Heart right ventricle (tissue), 16 donors: ENCODE measurements at regions of chr6 and their contacts with region 1.

Region 1: GRCh38 chr6:160348142-160349019 is at the start of gene SLC22A3:
- DNase-seq: peak in 1 of 2 donors; percentile 45
- ATAC-seq: peak; percentile 48 to 71 (median 60)
- H3K4me3 ChIP-seq: peak within 1 kb of the TSS; percentile 32 to 60 (median 52)
- H3K27ac ChIP-seq: peak within 1 kb of the TSS in 6 of 10 donors; percentile 7 to 64 (median 27)
- H3K4me1 ChIP-seq: peaks cover 0 to 16% (median 7%) of the 10 kb centered on the region in 9 donors
- H3K27me3 ChIP-seq: peaks cover 0 to 61% (median 48%) of the 10 kb centered on the region in 7 donors
- CTCF ChIP-seq: peak in 3 of 9 donors; percentile 9 to 19 (median 14)
- total RNA-seq, gene SLC22A3: 0.26 to 1.3 (median 0.64) TPM

Region 2: DNA sequence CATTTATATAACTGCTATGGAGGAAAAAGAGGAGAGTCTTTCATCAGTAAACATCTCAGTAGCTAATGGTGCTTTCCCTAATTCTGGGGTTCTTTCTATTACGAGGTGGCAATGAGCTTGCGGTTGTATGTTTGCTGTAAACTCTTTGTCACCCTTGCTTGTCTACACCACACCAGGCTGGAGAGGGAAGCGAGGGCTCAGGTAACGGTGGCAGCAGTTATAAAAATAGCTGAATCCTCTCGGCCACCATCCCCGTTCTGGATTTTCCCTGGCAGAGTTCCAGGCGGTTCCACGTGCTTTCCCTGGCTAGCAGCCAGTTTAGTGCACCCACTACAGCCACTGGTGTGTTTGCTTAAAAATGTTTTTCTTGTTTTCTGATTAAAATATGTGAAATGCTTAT is 418.6 kb before region 1 on chr6:
- intact Hi-C with region 1: loop called in 1 of 10 experiments (anchors 5 kb)
- DNase-seq: peak in 1 of 2 donors; percentile 36
- ATAC-seq: peak in 1 of 8 donors; percentile 42
- H3K4me3 ChIP-seq: no peak overlapping the region
- H3K27ac ChIP-seq: no peak overlapping the region
- H3K4me1 ChIP-seq: peaks cover 0 to 23% (median 7%) of the 10 kb centered on the region in 9 donors
- H3K27me3 ChIP-seq: no peaks in the 10 kb centered on the region
- CTCF ChIP-seq: no peak

Region 3: DNA sequence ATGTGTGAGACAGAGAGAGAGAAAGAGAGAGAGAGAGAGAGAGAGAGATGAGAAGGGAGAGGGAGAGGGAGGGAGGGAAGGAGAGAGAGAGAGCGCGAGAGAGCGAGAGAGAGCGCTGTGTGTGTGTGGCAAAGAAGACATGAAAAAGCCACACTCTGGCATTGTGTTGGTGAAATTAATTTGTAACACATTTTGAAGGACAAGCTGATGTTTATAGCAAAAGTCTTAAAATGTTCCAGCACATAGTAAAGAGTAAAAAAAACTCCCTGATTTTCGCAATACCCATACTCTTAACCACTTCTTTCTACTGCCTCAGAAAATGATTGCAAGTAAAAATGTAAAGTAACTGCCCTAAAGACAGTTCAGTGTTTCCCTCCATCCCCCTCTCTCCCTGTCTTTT is 170.1 kb before region 1 on chr6:
- intact Hi-C with region 1: no loop called
- DNase-seq: no peak
- ATAC-seq: no peak
- H3K4me3 ChIP-seq: no peak overlapping the region
- H3K27ac ChIP-seq: no peak overlapping the region
- H3K4me1 ChIP-seq: no peaks in the 10 kb centered on the region
- H3K27me3 ChIP-seq: peaks cover 0 to 7% (median 0%) of the 10 kb centered on the region in 7 donors
- CTCF ChIP-seq: no peak

Region 4: GRCh38 chr6:160379464-160379863 is 31.1 kb after region 1 on chr6:
- intact Hi-C with region 1: no loop called
- DNase-seq: no peak
- ATAC-seq: no peak
- H3K4me3 ChIP-seq: no peak overlapping the region
- H3K27ac ChIP-seq: no peak overlapping the region
- H3K4me1 ChIP-seq: no peaks in the 10 kb centered on the region
- H3K27me3 ChIP-seq: no peaks in the 10 kb centered on the region
- CTCF ChIP-seq: no peak

Region 5: DNA sequence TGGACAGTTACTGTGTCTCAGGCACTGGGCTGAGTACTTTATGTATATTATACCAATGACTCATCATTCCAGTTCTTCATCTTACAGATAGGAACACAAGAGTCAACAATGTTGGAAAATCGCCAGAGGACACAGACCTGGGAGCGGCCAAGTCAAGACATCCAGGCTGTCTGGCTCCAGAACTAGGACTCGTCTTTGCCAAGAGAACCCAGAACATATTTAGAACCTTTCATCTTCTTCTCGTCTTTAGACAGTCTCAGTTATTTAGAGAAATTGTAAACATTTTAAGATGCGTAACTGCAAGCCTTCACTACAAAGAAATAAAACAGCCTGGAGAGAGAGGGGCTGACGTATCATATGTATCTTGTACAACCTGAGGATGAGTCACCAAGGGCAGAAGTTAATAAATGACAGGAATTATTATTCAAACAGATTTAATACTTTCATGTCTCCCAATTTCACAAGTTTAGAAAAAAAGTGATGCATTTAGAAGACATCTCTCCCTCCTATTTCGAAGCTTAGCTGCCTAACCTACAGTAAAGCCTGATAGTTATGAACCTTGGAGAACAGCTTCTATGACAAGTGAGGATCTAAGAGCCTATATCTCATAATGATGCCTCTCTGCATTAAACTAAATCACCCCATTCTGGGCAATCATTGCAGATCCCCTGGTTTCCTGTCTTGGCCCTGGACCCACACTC is 43.2 kb after region 1 on chr6:
- intact Hi-C with region 1: no loop called
- DNase-seq: no peak
- ATAC-seq: no peak
- H3K4me3 ChIP-seq: no peak overlapping the region
- H3K27ac ChIP-seq: no peak overlapping the region
- H3K4me1 ChIP-seq: peaks cover 0 to 13% (median 0%) of the 10 kb centered on the region in 9 donors
- H3K27me3 ChIP-seq: no peaks in the 10 kb centered on the region
- CTCF ChIP-seq: no peak

Region 6: GRCh38 chr6:160583794-160584193 is 235.4 kb after region 1 on chr6:
- intact Hi-C with region 1: no loop called
- DNase-seq: no peak
- ATAC-seq: no peak
- H3K4me3 ChIP-seq: no peak overlapping the region
- H3K27ac ChIP-seq: no peak overlapping the region
- H3K4me1 ChIP-seq: no peaks in the 10 kb centered on the region
- H3K27me3 ChIP-seq: peaks cover 0 to 2% (median 0%) of the 10 kb centered on the region in 7 donors
- CTCF ChIP-seq: no peak